K562 (cell line): ENCODE measurements at regions of chr1 and their contacts with region 1.

Region 1: DNA sequence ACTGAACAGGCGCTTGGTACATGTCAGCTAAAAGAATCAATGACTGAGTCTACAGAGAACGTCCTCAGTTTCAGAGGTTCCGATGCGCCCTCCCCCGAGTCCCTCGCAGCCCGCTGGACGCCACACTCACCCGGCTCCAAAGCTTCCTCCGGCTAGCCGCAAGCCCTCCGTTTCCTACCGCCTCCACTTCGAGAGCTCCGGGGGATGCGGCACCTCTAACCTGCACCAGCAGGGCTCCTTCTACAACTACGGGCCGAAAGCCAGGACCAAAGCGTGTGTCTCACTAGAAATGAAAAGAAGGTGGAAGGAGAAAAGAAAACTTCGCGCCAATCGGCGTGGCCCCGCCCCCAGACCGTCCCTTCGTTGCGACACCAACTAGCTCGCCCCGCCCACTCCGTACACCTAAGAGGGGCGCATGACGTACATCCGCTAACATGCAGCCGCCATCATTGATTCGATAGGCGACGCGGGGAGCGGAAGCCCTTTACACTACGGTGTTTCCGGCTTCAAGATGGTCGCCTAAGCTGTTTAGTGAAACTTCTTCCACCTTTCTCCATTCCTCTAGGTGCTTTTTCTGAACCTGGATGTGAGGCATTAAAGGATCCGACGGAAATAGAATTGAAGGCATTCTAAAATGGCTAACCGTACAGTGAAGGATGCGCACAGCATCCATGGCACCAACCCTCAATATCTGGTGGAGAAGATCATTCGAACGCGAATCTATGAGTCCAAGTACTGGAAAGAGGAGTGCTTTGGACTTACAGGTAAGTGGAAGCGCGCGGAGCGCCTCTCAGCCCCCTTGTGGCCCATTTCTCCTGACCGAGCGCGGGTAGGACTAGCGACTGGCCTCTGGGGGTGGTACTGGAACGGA is at the starts of genes ORC1 and PRPF38A:
- DNase-seq: peak; percentile 94 to 100 (median 97)
- ATAC-seq: peak; percentile 90
- H3K4me3 ChIP-seq: peak within 1 kb of the TSS; percentile 80
- H3K27ac ChIP-seq: peak within 1 kb of the TSS; percentile 98
- H3K4me1 ChIP-seq: peaks cover 12 to 27% of the 10 kb centered on the region in 2 experiments; a peak in 4 of 5 replicates
- H3K27me3 ChIP-seq: no peaks in the 10 kb centered on the region
- CTCF ChIP-seq: peak; percentile 90 to 99 (median 95)
- EP300 ChIP-seq: no peak; the same call in 1 of the 2 replicates
- POLR2A ChIP-seq: peak; percentile 98
- RAD21 ChIP-seq: peak in 1 of 2 experiments; percentile 69; a peak in 2 of 4 replicates
- polyA plus RNA-seq, gene ORC1: 26.4 to 46.9 TPM
- polyA plus RNA-seq, gene PRPF38A: 126 to 198 TPM

Region 2: GRCh38 chr1:52393174-52393573 is 11.2 kb before region 1 on chr1:
- CTCF ChIA-PET with region 1: no interaction called
- POLR2A ChIA-PET with region 1: interaction called, 45 read pairs
- in situ Hi-C with region 1: no loop called
- intact Hi-C with region 1: no loop called
- DNase-seq: no peak
- ATAC-seq: 0 out of 3 replicates have a peak, but pooled peaks have one; percentile 15
- H3K4me3 ChIP-seq: no peak overlapping the region
- H3K27ac ChIP-seq: no peak overlapping the region
- H3K4me1 ChIP-seq: no peaks in the 10 kb centered on the region
- H3K27me3 ChIP-seq: no peaks in the 10 kb centered on the region
- CTCF ChIP-seq: no peak
- EP300 ChIP-seq: no peak
- POLR2A ChIP-seq: no peak
- RAD21 ChIP-seq: no peak

Region 3: GRCh38 chr1:52552505-52553361 is 148.4 kb after region 1 on chr1 and contains the start of gene TUT4:
- CTCF ChIA-PET with region 1: no interaction called
- POLR2A ChIA-PET with region 1: interaction called, 3 read pairs
- in situ Hi-C with region 1: no loop called
- intact Hi-C with region 1: loop called (anchors 2 kb)
- DNase-seq: peak; percentile 78 to 92 (median 80)
- ATAC-seq: peak; percentile 85
- H3K4me3 ChIP-seq: peak within 1 kb of the TSS; percentile 77
- H3K27ac ChIP-seq: peak within 1 kb of the TSS; percentile 87
- H3K4me1 ChIP-seq: peaks cover 9 to 19% of the 10 kb centered on the region in 2 experiments; a peak in 3 of 5 replicates
- H3K27me3 ChIP-seq: no peaks in the 10 kb centered on the region
- CTCF ChIP-seq: peak in 1 of 3 experiments; percentile 38; a peak in 3 of 6 replicates
- EP300 ChIP-seq: no peak; the same call in 1 of the 2 replicates
- POLR2A ChIP-seq: peak; percentile 87
- RAD21 ChIP-seq: peak; percentile 46 to 53
- polyA plus RNA-seq, gene TUT4: 15.8 to 21.3 TPM

Region 4: DNA sequence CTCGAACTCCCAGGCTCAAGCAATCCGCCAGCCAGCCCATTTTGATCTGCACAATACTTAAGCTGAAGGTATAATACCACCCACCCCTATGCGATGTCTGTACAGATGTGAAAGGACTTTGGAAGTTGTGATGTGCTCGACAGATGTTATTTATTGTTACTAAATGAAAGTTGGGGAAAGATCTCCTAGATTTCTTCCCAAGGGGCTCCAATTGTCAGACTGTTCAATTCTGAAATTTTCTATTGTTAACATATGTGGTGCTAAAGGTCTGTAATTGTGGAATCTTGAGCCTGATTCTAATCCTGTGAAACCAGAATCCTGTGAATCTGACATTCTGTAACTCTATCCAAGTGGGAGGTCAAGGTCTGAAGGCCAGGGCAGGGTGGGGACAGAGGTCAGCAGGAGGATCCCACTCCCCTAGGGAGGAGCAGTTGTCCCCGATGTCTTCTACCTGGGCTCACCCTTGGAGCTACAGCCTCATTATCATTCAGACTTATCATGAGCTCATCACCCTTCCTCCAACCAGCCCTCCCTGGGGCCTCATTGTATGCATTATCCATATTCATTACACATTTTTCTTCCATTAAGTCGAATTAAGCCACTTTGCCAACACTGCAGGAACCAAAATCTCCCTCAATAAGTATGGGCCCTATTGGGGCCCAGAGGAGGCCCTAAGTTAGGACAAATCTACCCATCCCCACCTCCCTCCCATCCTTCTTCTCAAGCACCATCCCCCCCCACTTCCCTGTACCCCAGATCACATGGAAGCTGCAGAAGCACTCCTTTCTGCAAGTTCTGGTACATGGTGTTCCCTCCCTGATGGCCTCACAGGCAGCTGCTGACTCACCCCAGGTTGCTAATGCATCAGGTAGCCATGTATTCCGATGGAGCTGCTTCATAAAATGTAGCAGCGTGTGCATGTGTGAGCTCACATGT is 260.9 kb after region 1 on chr1:
- CTCF ChIA-PET with region 1: no interaction called
- POLR2A ChIA-PET with region 1: interaction called, 10 read pairs
- in situ Hi-C with region 1: no loop called
- intact Hi-C with region 1: loop called (anchors 5 kb)
- DNase-seq: no peak
- ATAC-seq: no peak
- H3K4me3 ChIP-seq: no peak overlapping the region
- H3K27ac ChIP-seq: no peak overlapping the region
- H3K4me1 ChIP-seq: peaks cover 2% of the 10 kb centered on the region in 2 experiments; a peak in 3 of 5 replicates
- H3K27me3 ChIP-seq: no peaks in the 10 kb centered on the region
- CTCF ChIP-seq: no peak
- EP300 ChIP-seq: no peak
- POLR2A ChIP-seq: no peak
- RAD21 ChIP-seq: no peak